Activated CD4-positive, alpha-beta memory T cell treated with anti-CD3 and anti-CD28 coated beads for 36 hours (primary cell): ENCODE measurements at regions of chr7 and their contacts with region 1.

Region 1: DNA sequence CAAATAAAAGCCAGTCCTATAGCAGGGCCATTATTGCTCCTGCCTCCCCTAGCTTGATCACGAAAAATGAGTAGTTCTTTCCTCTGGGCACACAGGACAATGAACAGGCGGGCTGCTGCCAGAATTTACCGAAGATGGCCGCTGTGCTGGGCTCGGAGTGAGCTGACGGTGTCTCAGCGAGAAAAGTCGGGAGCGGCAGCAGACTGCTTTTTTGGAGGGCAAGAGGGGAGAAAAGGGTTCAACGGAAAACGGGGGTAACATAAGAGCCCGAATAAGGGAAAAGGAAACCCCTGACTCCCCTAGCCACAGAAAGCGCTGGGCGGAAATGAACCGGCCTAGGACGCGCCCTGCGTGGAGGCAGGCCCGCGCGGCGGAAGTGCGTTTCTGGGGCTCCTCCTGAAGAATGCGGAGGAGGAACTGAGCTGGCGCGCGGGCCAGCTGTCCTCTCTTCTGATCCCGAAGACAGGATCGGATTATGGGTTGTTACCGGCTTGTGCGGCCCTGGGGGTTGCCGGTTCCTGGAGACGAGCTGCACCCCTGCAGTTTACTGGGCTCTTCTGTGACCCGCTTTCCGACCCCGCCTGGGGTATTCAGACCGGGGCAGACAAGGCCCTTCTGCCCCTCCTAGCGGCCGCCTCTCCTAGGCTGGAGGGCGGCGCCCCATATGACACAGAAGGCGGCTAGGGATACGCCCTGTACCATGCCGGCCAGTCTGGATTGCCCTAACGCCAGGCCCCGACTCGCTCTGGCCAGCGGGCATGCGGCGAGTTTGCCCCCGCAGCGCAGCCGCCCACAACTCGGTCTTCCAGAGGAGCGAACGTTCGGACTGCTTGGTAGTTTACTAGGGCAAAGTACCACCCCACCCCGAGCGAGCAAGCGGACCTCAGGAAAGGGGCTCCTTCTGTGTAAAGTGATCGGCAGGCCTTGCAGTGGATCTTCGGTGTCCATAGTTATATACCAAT is 30.1 kb upstream of the KMT2E start:
- DNase-seq: peak; percentile 91
- H3K4me3 Mint-ChIP-seq: peak overlapping the region; percentile 100
- H3K27ac Mint-ChIP-seq: peak overlapping the region; percentile 100
- H3K4me1 Mint-ChIP-seq: peaks cover 74% of the 10 kb centered on the region
- H3K27me3 Mint-ChIP-seq: no peaks in the 10 kb centered on the region

Region 2: DNA sequence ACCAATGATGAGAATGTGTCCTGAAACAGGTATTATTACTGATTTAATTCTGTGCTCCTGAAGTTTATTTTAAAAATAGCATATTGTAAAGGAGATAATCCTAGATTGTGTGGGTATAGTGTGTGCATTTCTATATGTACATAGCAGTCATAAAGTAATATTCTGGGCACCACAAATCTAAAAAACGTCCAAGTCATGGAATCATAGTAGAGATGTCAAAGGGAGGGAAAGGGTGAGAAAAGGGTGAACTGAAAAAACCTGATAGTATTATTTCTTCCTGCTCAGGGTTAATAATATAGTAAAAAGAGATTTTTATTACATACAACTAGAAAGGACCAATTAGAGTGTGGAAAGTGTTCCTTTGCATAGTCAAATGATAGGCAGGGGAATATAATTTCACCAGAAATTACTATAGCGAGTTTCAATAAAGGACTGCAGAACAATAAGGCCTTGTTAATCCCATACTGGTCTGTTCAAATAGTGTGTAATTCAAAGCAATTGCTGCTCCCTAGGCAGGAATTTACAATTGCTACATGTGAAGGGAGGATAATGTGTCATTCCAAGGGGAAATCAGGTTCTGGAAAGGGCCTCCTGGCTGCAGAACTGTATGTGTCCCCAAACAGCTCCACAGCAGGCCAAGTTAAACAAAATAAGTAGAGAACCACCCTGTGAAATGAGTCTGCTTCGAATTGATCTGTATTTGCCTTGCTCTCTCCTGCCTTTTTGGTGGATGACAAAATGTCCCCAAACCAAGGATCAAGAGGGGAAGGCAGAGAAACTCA is 12.4 kb before region 1 on chr7:
- CTCF ChIA-PET with region 1: interaction called, 11 read pairs
- POLR2A ChIA-PET with region 1: interaction called, 4 read pairs
- intact Hi-C with region 1: no loop called
- DNase-seq: no peak
- H3K4me3 Mint-ChIP-seq: no peak overlapping the region
- H3K27ac Mint-ChIP-seq: no peak overlapping the region
- H3K4me1 Mint-ChIP-seq: peaks cover 18% of the 10 kb centered on the region
- H3K27me3 Mint-ChIP-seq: no peaks in the 10 kb centered on the region

Region 3: GRCh38 chr7:105013221-105013815 is 29.5 kb after region 1 on chr7:
- CTCF ChIA-PET with region 1: interaction called, 80 read pairs
- POLR2A ChIA-PET with region 1: interaction called, 202 read pairs
- intact Hi-C with region 1: loop called (anchors 1 kb)
- DNase-seq: peak; percentile 96
- H3K4me3 Mint-ChIP-seq: peak overlapping the region; percentile 99
- H3K27ac Mint-ChIP-seq: peak overlapping the region; percentile 100
- H3K4me1 Mint-ChIP-seq: peaks cover 20% of the 10 kb centered on the region
- H3K27me3 Mint-ChIP-seq: no peaks in the 10 kb centered on the region

Region 4: GRCh38 chr7:105046414-105046813 is 62.6 kb after region 1 on chr7:
- CTCF ChIA-PET with region 1: interaction called, 55 read pairs
- POLR2A ChIA-PET with region 1: no interaction called
- intact Hi-C with region 1: loop called (anchors 1 kb)
- DNase-seq: no peak
- H3K4me3 Mint-ChIP-seq: no peak overlapping the region
- H3K27ac Mint-ChIP-seq: no peak overlapping the region
- H3K4me1 Mint-ChIP-seq: peaks cover 43% of the 10 kb centered on the region
- H3K27me3 Mint-ChIP-seq: no peaks in the 10 kb centered on the region

Region 5: GRCh38 chr7:105098863-105099515 is 115.1 kb after region 1 on chr7:
- CTCF ChIA-PET with region 1: interaction called, 3 read pairs
- POLR2A ChIA-PET with region 1: interaction called, 3 read pairs
- intact Hi-C with region 1: loop called (anchors 5 kb)
- DNase-seq: no peak
- H3K4me3 Mint-ChIP-seq: no peak overlapping the region
- H3K27ac Mint-ChIP-seq: peak overlapping the region; percentile 24
- H3K4me1 Mint-ChIP-seq: peaks cover 63% of the 10 kb centered on the region
- H3K27me3 Mint-ChIP-seq: no peaks in the 10 kb centered on the region

Region 6: GRCh38 chr7:105429746-105430612 is 446.1 kb after region 1 on chr7:
- CTCF ChIA-PET with region 1: interaction called, 4 read pairs
- POLR2A ChIA-PET with region 1: no interaction called
- intact Hi-C with region 1: loop called (anchors 2 kb)
- DNase-seq: peak; percentile 57
- H3K4me3 Mint-ChIP-seq: no peak overlapping the region
- H3K27ac Mint-ChIP-seq: no peak overlapping the region
- H3K4me1 Mint-ChIP-seq: peaks cover 19% of the 10 kb centered on the region
- H3K27me3 Mint-ChIP-seq: no peaks in the 10 kb centered on the region